ENCODE measurements at regions of chr14 and their contacts with region 1.

Region 1: DNA sequence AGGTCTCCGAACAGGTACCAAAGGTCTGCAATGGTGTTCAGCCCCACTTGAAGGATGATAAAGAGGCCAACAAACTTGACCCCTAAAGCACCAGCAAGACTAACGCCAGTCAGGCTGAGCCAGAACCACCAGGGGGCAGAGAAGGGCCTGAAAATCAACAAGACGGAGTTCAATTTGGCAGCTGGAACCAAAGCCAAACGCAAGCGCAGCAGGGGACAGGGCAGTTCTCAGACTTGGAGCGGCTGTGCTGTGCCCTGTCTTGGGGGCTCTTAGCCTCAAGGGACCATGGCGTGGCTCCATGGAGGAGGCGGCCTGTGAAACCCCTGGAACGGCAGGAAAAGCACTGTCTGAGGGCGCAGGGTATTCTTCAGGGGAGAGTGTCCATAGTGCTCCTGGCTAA is 19.6 kb downstream of the POMT2 start:
- DNase-seq: peak; percentile 43 to 78 (median 54)
- ATAC-seq: peak; percentile 92
- H3K4me3 ChIP-seq: no peak overlapping the region
- H3K27ac ChIP-seq: no peak overlapping the region
- H3K4me1 ChIP-seq: peaks cover 0 to 5% of the 10 kb centered on the region in 2 experiments; a peak in 2 of 5 replicates
- H3K27me3 ChIP-seq: no peaks in the 10 kb centered on the region
- CTCF ChIP-seq: peak; percentile 75 to 85 (median 78)
- EP300 ChIP-seq: no peak
- POLR2A ChIP-seq: no peak
- RAD21 ChIP-seq: peak; percentile 57 to 71

Region 2: DNA sequence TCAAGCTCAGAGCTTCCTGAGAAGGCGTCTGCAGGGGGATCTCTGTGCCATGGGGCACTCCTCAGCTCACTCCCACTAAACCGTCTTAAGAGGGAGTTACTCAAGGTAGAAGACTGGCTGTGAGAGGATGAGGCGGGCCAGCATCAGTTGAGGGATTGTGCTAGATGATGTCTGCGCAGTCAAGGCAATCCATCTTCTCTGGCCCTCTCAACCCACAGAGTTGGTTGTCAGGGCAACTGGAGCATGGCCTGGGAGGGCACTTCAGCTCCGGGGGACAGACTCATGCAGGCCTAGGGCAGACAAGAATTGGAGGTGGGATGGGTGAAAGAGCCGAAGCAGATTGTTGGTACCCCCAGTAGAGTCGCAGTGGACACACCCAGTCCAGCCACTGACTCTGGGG is 28.8 kb after region 1 on chr14:
- CTCF ChIA-PET with region 1: no interaction called
- POLR2A ChIA-PET with region 1: no interaction called
- in situ Hi-C with region 1: no loop called
- intact Hi-C with region 1: no loop called
- DNase-seq: no peak
- ATAC-seq: no peak
- H3K4me3 ChIP-seq: no peak overlapping the region
- H3K27ac ChIP-seq: no peak overlapping the region
- H3K4me1 ChIP-seq: peaks cover 0 to 7% of the 10 kb centered on the region in 2 experiments; a peak in 3 of 5 replicates
- H3K27me3 ChIP-seq: no peaks in the 10 kb centered on the region
- CTCF ChIP-seq: no peak
- EP300 ChIP-seq: no peak
- POLR2A ChIP-seq: no peak
- RAD21 ChIP-seq: no peak

Region 3: DNA sequence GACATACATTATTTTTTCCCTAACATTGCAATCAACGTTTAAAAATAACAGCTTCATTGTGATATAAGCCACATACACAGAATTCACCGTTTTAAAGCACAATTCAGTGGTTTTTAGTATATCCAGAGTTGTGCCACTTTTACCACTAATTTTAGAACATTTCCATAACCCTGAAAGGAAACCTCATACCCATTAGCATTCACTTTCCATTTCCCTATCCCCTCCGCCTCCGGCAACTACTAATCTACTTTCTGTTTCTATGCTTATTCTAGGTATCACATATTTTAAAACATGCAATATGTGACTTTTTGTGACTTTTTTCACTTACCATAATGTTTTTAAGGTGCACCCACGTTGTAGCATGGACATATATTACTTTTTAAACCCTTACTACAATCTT is 253.1 kb after region 1 on chr14:
- CTCF ChIA-PET with region 1: interaction called, 4 read pairs
- POLR2A ChIA-PET with region 1: no interaction called
- in situ Hi-C with region 1: no loop called
- intact Hi-C with region 1: loop called (anchors 5 kb)
- DNase-seq: no peak
- ATAC-seq: no peak
- H3K4me3 ChIP-seq: no peak overlapping the region
- H3K27ac ChIP-seq: no peak overlapping the region
- H3K4me1 ChIP-seq: no peaks in the 10 kb centered on the region
- H3K27me3 ChIP-seq: no peaks in the 10 kb centered on the region
- CTCF ChIP-seq: no peak
- EP300 ChIP-seq: no peak
- POLR2A ChIP-seq: no peak
- RAD21 ChIP-seq: no peak